Activated T-helper 2 cell treated with anti-CD3 and anti-CD28 coated beads, Interferon-gamma antibody, Interleukin-2, Interleukin-4, amounts not matched to agents 10 μg/mL and 5 μg/mL and 100 μg/mL, durations not matched to agents 14 hours and 24 hours and 36 hours (primary cell): ENCODE measurements at regions of chr7 and their contacts with region 1.

Region 1: GRCh38 chr7:135977007-135977741 is at the start of gene MTPN:
- DNase-seq: peak; percentile 96
- H3K4me3 Mint-ChIP-seq: peak within 1 kb of the TSS; percentile 88
- H3K27ac Mint-ChIP-seq: peak within 1 kb of the TSS; percentile 76
- H3K4me1 Mint-ChIP-seq: peaks cover 60% of the 10 kb centered on the region
- H3K27me3 Mint-ChIP-seq: no peaks in the 10 kb centered on the region
- total RNA-seq, gene MTPN: 113 and 118 TPM in 2 replicates

Region 2: GRCh38 chr7:134458806-134459698 is 1518.1 kb before region 1 on chr7 and contains the start of gene AKR1B1:
- intact Hi-C with region 1: loop called (anchors 10 kb)
- DNase-seq: peak; percentile 85
- H3K4me3 Mint-ChIP-seq: peak within 1 kb of the TSS; percentile 82
- H3K27ac Mint-ChIP-seq: peak within 1 kb of the TSS; percentile 64
- H3K4me1 Mint-ChIP-seq: peaks cover 31% of the 10 kb centered on the region
- H3K27me3 Mint-ChIP-seq: no peaks in the 10 kb centered on the region
- total RNA-seq, gene AKR1B1: 102 and 107 TPM in 2 replicates

Region 3: GRCh38 chr7:135509903-135510602 is 467.1 kb before region 1 on chr7 and contains the start of gene CNOT4:
- intact Hi-C with region 1: loop called (anchors 1 kb)
- DNase-seq: peak; percentile 91
- H3K4me3 Mint-ChIP-seq: no peak within 1 kb of the TSS
- H3K27ac Mint-ChIP-seq: no peak within 1 kb of the TSS
- H3K4me1 Mint-ChIP-seq: peaks cover 12% of the 10 kb centered on the region
- H3K27me3 Mint-ChIP-seq: no peaks in the 10 kb centered on the region
- total RNA-seq, gene CNOT4: 19.3 and 24.0 TPM in 2 replicates

Region 4: GRCh38 chr7:135930565-135931461 is 46.4 kb before region 1 on chr7:
- intact Hi-C with region 1: loop called (anchors 5 kb)
- DNase-seq: no peak
- H3K4me3 Mint-ChIP-seq: no peak overlapping the region
- H3K27ac Mint-ChIP-seq: no peak overlapping the region
- H3K4me1 Mint-ChIP-seq: peaks cover 17% of the 10 kb centered on the region
- H3K27me3 Mint-ChIP-seq: no peaks in the 10 kb centered on the region

Region 5: DNA sequence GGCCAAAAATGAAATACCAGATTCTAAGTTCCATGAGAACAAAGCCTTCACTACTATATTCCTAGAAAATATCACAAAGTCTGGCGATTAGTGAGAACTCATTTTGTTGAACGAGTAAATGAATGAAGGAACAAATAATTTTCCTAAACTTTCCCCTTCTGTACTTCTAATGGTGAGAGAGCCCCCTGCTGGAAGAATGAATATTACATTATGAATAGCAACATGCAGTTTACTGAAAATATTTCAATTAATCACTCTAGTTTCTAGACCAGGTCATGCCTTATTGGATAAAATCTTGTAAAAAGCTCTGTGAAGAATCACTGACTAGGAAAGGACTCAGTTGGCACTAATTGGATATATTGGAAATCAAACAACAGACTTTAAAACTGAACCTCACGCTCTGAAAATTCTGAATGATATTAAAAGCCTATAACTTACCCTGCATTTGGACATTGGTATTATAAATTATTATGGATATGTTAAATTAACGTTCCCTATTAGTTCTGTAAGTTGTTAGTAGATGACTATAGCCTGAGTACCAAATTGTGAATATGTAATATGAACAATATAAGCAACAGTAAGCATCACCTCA is 32.4 kb after region 1 on chr7:
- intact Hi-C with region 1: loop called (anchors 2 kb)
- DNase-seq: no peak
- H3K4me3 Mint-ChIP-seq: no peak overlapping the region
- H3K27ac Mint-ChIP-seq: no peak overlapping the region
- H3K4me1 Mint-ChIP-seq: no peaks in the 10 kb centered on the region
- H3K27me3 Mint-ChIP-seq: peaks cover 9% of the 10 kb centered on the region

Region 6: GRCh38 chr7:136056651-136057231 is 79.6 kb after region 1 on chr7:
- intact Hi-C with region 1: no loop called
- DNase-seq: no peak
- H3K4me3 Mint-ChIP-seq: no peak overlapping the region
- H3K27ac Mint-ChIP-seq: no peak overlapping the region
- H3K4me1 Mint-ChIP-seq: no peaks in the 10 kb centered on the region
- H3K27me3 Mint-ChIP-seq: no peaks in the 10 kb centered on the region

Region 7: GRCh38 chr7:136528329-136528728 is 551.2 kb after region 1 on chr7:
- intact Hi-C with region 1: no loop called
- DNase-seq: no peak
- H3K4me3 Mint-ChIP-seq: no peak overlapping the region
- H3K27ac Mint-ChIP-seq: no peak overlapping the region
- H3K4me1 Mint-ChIP-seq: no peaks in the 10 kb centered on the region
- H3K27me3 Mint-ChIP-seq: no peaks in the 10 kb centered on the region